MCF 10A (cell line): ENCODE measurements at regions of chr10 and their contacts with region 1.

Region 1: GRCh38 chr10:104016661-104017060 is 49.7 kb downstream of the SLK start:
- DNase-seq: no peak
- H3K4me3 Mint-ChIP-seq: no peak overlapping the region
- H3K27ac Mint-ChIP-seq: no peak overlapping the region
- H3K4me1 Mint-ChIP-seq: no peaks in the 10 kb centered on the region
- H3K27me3 Mint-ChIP-seq: no peaks in the 10 kb centered on the region
- CTCF ChIP-seq: no peak

Region 2: DNA sequence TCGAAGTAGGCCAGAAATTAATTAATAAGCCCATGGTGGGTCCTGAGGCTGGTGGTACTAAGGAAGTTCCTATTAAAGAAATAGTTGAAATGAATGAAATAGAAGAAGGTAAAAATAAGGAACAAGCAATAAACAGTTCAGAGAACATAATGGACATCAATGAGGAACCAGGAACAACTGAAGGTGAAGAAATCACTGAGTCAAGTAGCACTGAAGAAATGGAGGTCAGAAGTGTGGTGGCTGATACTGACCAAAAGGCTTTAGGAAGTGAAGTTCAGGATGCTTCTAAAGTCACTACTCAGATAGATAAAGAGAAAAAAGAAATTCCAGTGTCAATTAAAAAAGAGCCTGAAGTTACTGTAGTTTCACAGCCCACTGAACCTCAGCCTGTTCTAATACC is 13.8 kb before region 1 on chr10:
- CTCF ChIA-PET with region 1: no interaction called
- POLR2A ChIA-PET with region 1: interaction called, 15 read pairs
- intact Hi-C with region 1: no loop called
- DNase-seq: no peak
- H3K4me3 Mint-ChIP-seq: no peak overlapping the region
- H3K27ac Mint-ChIP-seq: no peak overlapping the region
- H3K4me1 Mint-ChIP-seq: peaks cover 6% of the 10 kb centered on the region
- H3K27me3 Mint-ChIP-seq: no peaks in the 10 kb centered on the region
- CTCF ChIP-seq: no peak

Region 3: GRCh38 chr10:104028146-104028545 is 11.5 kb after region 1 on chr10:
- CTCF ChIA-PET with region 1: interaction called, 4 read pairs
- POLR2A ChIA-PET with region 1: interaction called, 15 read pairs
- intact Hi-C with region 1: no loop called
- DNase-seq: peak; percentile 20
- H3K4me3 Mint-ChIP-seq: no peak overlapping the region
- H3K27ac Mint-ChIP-seq: peak overlapping the region; percentile 75
- H3K4me1 Mint-ChIP-seq: no peaks in the 10 kb centered on the region
- H3K27me3 Mint-ChIP-seq: no peaks in the 10 kb centered on the region
- CTCF ChIP-seq: peak; percentile 20